ENCODE measurements at regions of chr12 and their contacts with region 1.

Region 1: DNA sequence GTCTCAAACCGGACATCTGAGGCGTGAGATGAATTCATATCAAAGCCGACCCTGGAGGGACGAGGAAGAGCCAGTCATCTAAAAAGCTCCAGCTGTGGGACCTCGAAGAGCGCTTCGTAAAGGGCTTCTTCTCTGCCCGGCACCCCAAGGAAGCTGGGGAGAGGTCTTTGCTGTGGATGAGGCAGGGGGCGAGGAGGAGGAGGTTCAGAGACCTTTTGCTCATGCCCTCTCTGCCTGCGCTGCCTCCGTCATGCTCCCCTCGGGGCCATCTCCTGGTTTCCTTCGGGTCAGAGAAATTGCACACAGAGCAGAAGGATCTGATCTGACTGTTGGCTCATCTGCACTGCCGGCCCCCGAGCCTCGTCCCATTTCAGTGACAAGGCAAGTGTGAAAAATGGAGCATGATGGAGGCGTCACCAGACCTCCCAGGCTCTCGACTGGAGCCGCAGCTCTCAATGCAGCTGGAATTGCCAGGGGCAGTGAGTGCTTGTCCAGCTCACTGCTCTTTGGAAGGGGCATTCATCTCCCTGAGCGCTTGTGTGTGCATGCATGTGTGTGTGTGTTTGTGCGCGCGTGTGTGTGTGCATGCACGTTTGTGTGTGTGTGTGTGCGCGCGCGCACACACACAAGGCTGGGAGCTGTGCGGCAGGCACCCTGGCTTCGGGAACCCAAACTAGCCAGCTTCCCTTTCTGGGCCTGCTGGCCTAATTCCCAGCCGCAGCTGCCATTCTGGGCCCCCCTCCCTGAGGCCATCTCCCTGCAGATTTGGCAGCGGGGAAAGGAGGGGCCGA is 9.2 kb downstream of the CABP1 start:
- DNase-seq: no peak
- ATAC-seq: no peak
- H3K4me3 ChIP-seq: peak overlapping the region; percentile 33 to 47 (median 40)
- H3K27ac ChIP-seq: peak overlapping the region in 3 of 4 donors; percentile 38 to 45 (median 43)
- H3K4me1 ChIP-seq: peaks cover 14 to 17% of the 10 kb centered on the region in 2 donors
- H3K27me3 ChIP-seq: peaks cover 3 to 11% (median 10%) of the 10 kb centered on the region in 3 donors
- CTCF ChIP-seq: peak in 1 of 5 experiments; percentile 28
- POLR2A ChIP-seq: no peak

Region 2: DNA sequence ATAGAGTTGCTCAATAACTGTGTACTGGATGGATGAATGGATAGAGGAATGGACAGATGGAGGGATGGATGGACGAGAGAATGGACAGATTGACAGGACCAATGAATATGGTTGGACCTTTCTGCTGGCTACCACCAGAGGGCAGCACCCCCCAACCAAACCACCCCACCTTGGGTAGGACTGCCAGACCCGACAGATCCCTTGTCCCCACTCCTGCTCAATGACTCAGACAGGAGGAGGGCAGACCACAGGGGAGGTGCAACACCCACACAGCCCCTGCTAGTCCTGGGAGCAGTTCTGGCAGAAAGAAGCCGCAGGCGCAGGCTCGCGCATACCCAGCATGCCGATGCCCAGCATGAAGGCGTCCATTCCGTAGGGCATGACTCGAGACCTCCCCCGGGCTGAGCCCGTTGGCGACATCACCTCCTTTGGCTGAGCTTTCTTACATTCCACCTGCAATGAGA is 293.0 kb before region 1 on chr12:
- in situ Hi-C with region 1: no loop called
- intact Hi-C with region 1: loop called (anchors 5 kb)
- DNase-seq: peak; percentile 48 to 63
- ATAC-seq: peak; percentile 83 to 92
- H3K4me3 ChIP-seq: no peak overlapping the region
- H3K27ac ChIP-seq: no peak overlapping the region
- H3K4me1 ChIP-seq: peaks cover 0 to 3% of the 10 kb centered on the region in 2 donors
- H3K27me3 ChIP-seq: peaks cover 3 to 6% (median 5%) of the 10 kb centered on the region in 3 donors
- CTCF ChIP-seq: peak; percentile 52 to 86 (median 83)
- POLR2A ChIP-seq: no peak

Region 3: DNA sequence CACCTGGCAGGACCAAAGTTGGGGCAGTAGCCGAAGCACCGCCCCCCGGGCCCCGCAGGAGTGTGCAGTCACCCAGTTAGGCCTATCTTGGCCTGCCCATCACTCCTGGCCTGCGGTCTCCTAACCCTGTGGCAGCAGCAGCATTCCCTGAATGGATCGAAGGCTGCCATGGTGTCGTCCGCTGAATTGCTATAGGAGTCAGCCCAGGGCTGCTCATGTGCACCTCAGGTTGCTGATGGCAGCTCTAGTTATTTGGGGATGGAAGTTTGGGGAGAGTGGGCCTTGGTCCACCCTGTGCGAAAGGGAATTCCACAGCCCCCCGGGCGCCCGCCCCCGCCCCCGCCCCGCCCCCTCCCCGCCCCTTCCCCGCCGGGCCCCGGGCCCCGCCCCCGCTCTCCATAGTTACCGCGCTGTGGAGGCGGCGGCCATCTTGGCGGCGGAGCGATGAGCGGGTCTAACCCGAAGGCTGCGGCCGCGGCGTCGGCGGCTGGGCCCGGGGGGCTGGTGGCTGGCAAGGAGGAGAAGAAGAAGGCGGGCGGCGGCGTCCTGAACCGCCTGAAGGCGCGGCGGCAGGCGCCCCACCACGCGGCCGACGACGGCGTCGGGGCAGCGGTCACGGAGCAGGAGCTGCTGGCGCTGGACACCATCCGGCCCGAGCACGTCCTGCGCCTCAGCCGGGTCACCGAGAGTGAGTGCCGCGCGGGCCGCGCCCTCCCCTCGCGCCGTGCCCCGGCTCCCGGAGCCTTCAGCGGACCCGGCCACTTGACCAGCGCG is 60.6 kb after region 1 on chr12 and contains the start of gene UNC119B:
- in situ Hi-C with region 1: loop called (anchors 5 kb)
- intact Hi-C with region 1: loop called (anchors 1 kb)
- DNase-seq: peak in 1 of 2 donors; percentile 42
- ATAC-seq: peak; percentile 79 to 81
- H3K4me3 ChIP-seq: peak within 1 kb of the TSS; percentile 63 to 87 (median 74)
- H3K27ac ChIP-seq: peak within 1 kb of the TSS; percentile 69 to 94 (median 85)
- H3K4me1 ChIP-seq: peaks cover 19 to 25% of the 10 kb centered on the region in 2 donors
- H3K27me3 ChIP-seq: no peaks in the 10 kb centered on the region
- CTCF ChIP-seq: peak in 1 of 5 experiments; percentile 24
- POLR2A ChIP-seq: peak; percentile 20 to 41
- total RNA-seq, gene UNC119B: 4.7 to 8.7 (median 7.8) TPM

Region 4: GRCh38 chr12:120971299-120972179 is 321.9 kb after region 1 on chr12:
- in situ Hi-C with region 1: loop called (anchors 5 to 10 kb)
- intact Hi-C with region 1: loop called (anchors 1 kb)
- DNase-seq: no peak
- ATAC-seq: peak; percentile 68 to 95
- H3K4me3 ChIP-seq: no peak overlapping the region
- H3K27ac ChIP-seq: no peak overlapping the region
- H3K4me1 ChIP-seq: no peaks in the 10 kb centered on the region
- H3K27me3 ChIP-seq: no peaks in the 10 kb centered on the region
- CTCF ChIP-seq: peak; percentile 65 to 75 (median 68)
- POLR2A ChIP-seq: no peak

Measured in gastrocnemius medialis (tissue), 4 donors.